ENCODE measurements at regions of chr2 and their contacts with region 1.

Region 1: GRCh38 chr2:225041851-225042799 is at the start of gene DOCK10:
- DNase-seq: peak; percentile 69
- ATAC-seq: peak; percentile 72
- H3K4me3 ChIP-seq: peak within 1 kb of the TSS; percentile 87
- H3K27ac ChIP-seq: peak within 1 kb of the TSS; percentile 27; the same call in 1 of the 2 replicates
- H3K4me1 ChIP-seq: peaks cover 2% of the 10 kb centered on the region; the same call in 1 of the 2 replicates
- H3K27me3 ChIP-seq: no peaks in the 10 kb centered on the region
- CTCF ChIP-seq: no peak
- POLR2A ChIP-seq: peak; percentile 10; the same call in 1 of the 2 replicates
- RAD21 ChIP-seq: no peak
- total RNA-seq, gene DOCK10: 63.6 and 75.3 TPM in 2 replicates

Region 2: DNA sequence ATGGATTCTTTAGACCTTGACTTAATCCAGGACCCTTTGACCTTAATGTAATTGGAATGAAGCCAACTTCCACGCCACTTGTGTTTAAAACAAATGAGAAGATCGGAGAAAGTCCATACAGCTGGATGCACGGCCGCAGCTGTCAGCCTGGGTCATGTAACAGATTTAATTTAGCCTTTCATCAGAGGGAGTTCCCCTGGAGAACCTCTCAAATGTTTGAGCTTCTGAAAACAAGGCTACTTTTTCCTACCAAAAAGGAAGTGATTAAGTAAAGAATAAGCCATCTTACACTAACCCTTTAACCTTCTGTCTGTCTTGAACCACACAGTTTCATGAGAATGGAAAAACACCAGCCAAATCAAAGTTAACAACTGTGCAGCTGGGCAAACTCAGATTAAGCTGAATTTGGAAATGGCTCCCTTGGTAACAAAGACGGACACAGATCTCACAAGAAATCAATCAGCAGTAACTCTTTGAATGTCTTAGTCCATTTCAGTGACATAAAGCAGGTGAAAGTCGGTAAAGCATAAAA is 103.4 kb before region 1 on chr2:
- CTCF ChIA-PET with region 1: no interaction called
- POLR2A ChIA-PET with region 1: no interaction called
- dilution Hi-C with region 1: no loop called
- in situ Hi-C with region 1: no loop called
- intact Hi-C with region 1: no loop called
- DNase-seq: peak; percentile 88
- ATAC-seq: peak; percentile 73
- H3K4me3 ChIP-seq: no peak overlapping the region
- H3K27ac ChIP-seq: no peak overlapping the region
- H3K4me1 ChIP-seq: 0 out of 2 replicates have a peak, but pooled peaks cover 3% of the 10 kb centered on the region
- H3K27me3 ChIP-seq: no peaks in the 10 kb centered on the region
- CTCF ChIP-seq: no peak
- POLR2A ChIP-seq: no peak
- RAD21 ChIP-seq: no peak

Region 3: DNA sequence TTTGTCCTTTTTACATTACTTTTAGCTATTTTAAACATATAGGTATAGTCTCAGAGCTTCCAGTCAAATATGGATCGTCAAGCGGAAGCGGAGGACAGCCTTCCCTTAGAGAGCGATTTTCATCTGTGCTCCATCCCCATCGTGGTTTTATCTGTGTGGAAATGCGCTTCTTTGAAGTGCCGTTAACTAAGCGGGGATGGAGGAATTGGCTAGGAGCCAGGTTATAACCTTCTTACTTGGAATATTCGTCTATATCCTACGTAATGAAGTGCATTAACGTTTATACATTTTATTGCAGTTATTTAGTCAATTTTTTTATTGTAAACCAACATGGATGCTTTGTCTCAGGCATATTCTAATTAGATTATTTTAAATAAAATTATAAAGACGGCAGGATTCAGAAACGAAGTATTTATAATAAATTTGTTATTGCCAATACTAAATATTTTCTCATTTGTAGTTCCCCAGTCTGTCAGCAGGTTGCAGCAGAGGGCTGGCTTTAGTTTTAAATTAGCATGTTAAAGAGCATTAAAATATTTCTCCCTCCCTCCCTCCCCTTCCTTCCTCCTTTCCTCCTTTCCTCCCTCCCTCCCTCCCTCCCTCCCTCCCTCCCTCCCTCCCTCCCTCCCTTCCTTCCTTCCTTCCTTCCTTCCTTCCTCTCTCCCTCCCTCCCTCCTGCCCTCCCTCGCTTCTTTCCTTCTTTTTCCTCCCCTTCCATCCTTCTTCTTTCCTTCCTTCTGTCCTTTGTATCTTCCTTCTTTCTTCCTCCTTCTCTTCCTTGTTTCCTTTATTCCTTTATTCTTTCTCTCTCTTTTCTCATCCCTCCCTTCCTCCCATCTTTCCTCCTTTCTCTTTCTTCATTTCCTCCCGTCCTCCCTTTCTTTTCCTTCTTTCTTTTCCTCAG is 80.7 kb after region 1 on chr2:
- CTCF ChIA-PET with region 1: no interaction called
- POLR2A ChIA-PET with region 1: no interaction called
- dilution Hi-C with region 1: no loop called
- in situ Hi-C with region 1: no loop called
- intact Hi-C with region 1: loop called (anchors 5 kb)
- DNase-seq: peak; percentile 47
- ATAC-seq: peak; percentile 70; the same call in 1 of the 2 replicates
- H3K4me3 ChIP-seq: no peak overlapping the region
- H3K27ac ChIP-seq: no peak overlapping the region
- H3K4me1 ChIP-seq: no peaks in the 10 kb centered on the region; the same call in 1 of the 2 replicates
- H3K27me3 ChIP-seq: no peaks in the 10 kb centered on the region
- CTCF ChIP-seq: peak; percentile 65
- POLR2A ChIP-seq: no peak
- RAD21 ChIP-seq: peak; percentile 72

Measured in IMR-90 (cell line).